ENCODE measurements at regions of chr17 and their contacts with region 1.

Region 1: DNA sequence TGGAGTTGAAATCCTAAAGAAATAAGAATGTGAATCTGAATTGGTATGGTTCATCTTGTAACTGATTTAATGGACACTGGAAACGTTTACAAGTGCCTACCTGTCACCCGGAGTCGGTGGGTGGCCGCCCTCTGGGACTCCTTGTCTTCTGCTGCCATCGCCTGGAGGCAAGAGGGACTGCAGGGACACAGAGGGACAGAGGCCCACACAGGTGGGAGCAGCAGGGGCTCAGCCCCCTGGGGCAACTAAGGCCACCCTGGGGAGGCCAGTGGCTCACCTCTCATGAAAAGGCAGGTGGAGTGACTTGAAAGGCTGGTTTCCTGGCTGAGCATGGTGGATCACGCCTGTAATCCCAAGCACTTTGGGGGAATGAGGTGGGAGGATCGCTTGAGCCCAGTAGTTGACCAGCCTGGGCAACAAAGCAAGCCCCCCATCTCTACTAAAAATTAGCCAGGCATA is 23.2 kb downstream of the TMEM92 start:
- DNase-seq: peak; percentile 47 to 81
- H3K4me3 ChIP-seq: no peak overlapping the region
- H3K27ac ChIP-seq: no peak overlapping the region
- H3K4me1 ChIP-seq: no peaks in the 10 kb centered on the region
- H3K27me3 ChIP-seq: no peaks in the 10 kb centered on the region
- CTCF ChIP-seq: peak; percentile 94

Region 2: DNA sequence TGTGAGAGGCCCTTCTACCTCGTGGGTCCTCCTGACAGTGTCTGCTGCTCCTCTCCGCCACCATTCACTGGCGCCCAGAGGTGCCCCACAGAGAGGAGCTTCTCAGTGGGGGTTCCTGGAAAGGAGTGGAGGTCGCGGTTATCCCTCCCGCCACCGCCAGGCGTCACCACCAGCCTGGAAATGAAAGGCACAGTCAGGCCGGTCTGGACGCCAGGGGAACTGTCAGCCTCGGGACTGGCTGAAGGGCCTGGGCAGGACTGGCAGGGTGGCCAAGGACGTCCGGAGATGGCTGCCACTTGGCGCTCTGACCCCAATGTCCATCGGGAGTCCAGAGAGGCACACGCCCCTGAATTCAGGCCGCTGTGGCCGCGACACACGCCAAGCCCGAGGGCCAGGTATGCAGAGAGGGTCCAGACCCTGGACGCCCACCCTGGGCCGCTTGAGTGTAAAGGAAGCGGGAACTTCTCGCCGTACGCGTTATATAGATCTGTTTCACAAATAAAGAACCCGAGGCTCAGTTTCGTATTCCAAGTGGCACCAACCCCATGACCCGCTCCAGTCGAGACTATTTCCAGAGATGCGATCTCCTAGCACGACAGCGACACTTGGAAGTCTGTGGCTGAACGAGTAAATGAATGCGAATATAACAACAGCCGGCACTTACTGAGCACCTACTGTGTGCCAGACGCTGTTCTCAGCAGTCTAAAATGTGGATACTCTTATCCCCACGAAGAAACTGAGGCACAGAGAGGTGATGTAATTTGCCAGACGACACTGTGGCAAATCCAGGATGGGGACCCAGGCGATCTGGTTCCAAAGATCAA is 729.4 kb before region 1 on chr17:
- CTCF ChIA-PET with region 1: no interaction called
- POLR2A ChIA-PET with region 1: no interaction called
- intact Hi-C with region 1: loop called (anchors 5 kb)
- DNase-seq: peak; percentile 69 to 88
- H3K4me3 ChIP-seq: peak overlapping the region; percentile 38; the same call in 1 of the 2 replicates
- H3K27ac ChIP-seq: no peak overlapping the region
- H3K4me1 ChIP-seq: 0 out of 2 replicates have a peak, but pooled peaks cover 6% of the 10 kb centered on the region
- H3K27me3 ChIP-seq: peaks cover 28% of the 10 kb centered on the region
- CTCF ChIP-seq: peak; percentile 99

Region 3: GRCh38 chr17:49861150-49861892 is 436.1 kb before region 1 on chr17:
- CTCF ChIA-PET with region 1: no interaction called
- POLR2A ChIA-PET with region 1: no interaction called
- intact Hi-C with region 1: loop called (anchors 1 kb)
- DNase-seq: peak; percentile 65 to 68
- H3K4me3 ChIP-seq: no peak overlapping the region
- H3K27ac ChIP-seq: no peak overlapping the region
- H3K4me1 ChIP-seq: peaks cover 4% of the 10 kb centered on the region
- H3K27me3 ChIP-seq: no peaks in the 10 kb centered on the region
- CTCF ChIP-seq: peak; percentile 99

Region 4: GRCh38 chr17:50026901-50027630 is 270.4 kb before region 1 on chr17:
- CTCF ChIA-PET with region 1: no interaction called
- POLR2A ChIA-PET with region 1: no interaction called
- intact Hi-C with region 1: loop called (anchors 10 kb)
- DNase-seq: peak; percentile 93 to 94
- H3K4me3 ChIP-seq: peak overlapping the region; percentile 58
- H3K27ac ChIP-seq: peak overlapping the region; percentile 96
- H3K4me1 ChIP-seq: peaks cover 54% of the 10 kb centered on the region
- H3K27me3 ChIP-seq: no peaks in the 10 kb centered on the region
- CTCF ChIP-seq: peak; percentile 99

Region 5: DNA sequence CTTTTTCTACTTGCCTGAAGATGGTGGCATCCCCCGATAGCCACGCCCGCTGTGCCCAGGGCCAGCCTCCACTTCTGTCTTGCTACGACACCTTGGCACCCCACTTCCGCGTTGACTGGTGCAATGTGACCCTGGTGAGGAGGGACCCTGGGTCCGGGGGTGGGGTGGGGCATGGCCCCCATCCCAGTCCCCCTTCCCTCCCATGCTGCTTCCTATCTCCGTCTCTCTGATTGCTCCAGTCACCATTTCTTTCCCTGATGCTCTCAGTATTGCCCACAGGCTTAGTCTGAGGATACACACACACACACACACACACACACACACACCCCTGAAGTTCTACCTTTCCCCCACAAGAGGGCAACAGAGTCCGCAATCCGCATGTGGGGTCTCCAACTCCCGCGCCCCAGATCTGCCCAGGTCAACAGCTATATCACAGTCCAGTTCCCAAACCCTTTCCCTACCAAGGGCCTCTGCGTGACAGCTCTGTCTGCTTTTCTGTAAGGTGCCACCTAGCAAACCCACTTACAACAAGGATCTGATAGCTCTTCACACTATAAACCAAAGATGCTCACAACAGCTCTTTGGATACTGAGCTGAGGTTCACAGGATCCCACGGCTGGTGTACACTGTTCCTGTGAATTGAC is 128.2 kb before region 1 on chr17:
- CTCF ChIA-PET with region 1: interaction called, 5 read pairs
- POLR2A ChIA-PET with region 1: interaction called, 5 read pairs
- intact Hi-C with region 1: loop called (anchors 1 kb)
- DNase-seq: peak; percentile 54 to 69
- H3K4me3 ChIP-seq: no peak overlapping the region
- H3K27ac ChIP-seq: peak overlapping the region; percentile 28; the same call in 1 of the 2 replicates
- H3K4me1 ChIP-seq: peaks cover 22% of the 10 kb centered on the region
- H3K27me3 ChIP-seq: no peaks in the 10 kb centered on the region
- CTCF ChIP-seq: peak; percentile 96

Region 6: GRCh38 chr17:50269477-50270434 is 27.7 kb before region 1 on chr17:
- CTCF ChIA-PET with region 1: interaction called, 5 read pairs
- POLR2A ChIA-PET with region 1: interaction called, 9 read pairs
- intact Hi-C with region 1: loop called (anchors 1 kb)
- DNase-seq: peak; percentile 46 to 59
- H3K4me3 ChIP-seq: no peak overlapping the region
- H3K27ac ChIP-seq: no peak overlapping the region
- H3K4me1 ChIP-seq: peaks cover 22% of the 10 kb centered on the region
- H3K27me3 ChIP-seq: no peaks in the 10 kb centered on the region; the same call in 1 of the 2 replicates
- CTCF ChIP-seq: peak; percentile 92

Region 7: GRCh38 chr17:50283246-50283645 is 14.2 kb before region 1 on chr17:
- CTCF ChIA-PET with region 1: no interaction called
- POLR2A ChIA-PET with region 1: no interaction called
- intact Hi-C with region 1: no loop called
- DNase-seq: no peak
- H3K4me3 ChIP-seq: no peak overlapping the region
- H3K27ac ChIP-seq: no peak overlapping the region
- H3K4me1 ChIP-seq: peaks cover 38% of the 10 kb centered on the region
- H3K27me3 ChIP-seq: no peaks in the 10 kb centered on the region
- CTCF ChIP-seq: no peak

Measured in PC-9 (cell line).